MCF 10A (cell line): ENCODE measurements at regions of chr11 and their contacts with region 1.

Region 1: DNA sequence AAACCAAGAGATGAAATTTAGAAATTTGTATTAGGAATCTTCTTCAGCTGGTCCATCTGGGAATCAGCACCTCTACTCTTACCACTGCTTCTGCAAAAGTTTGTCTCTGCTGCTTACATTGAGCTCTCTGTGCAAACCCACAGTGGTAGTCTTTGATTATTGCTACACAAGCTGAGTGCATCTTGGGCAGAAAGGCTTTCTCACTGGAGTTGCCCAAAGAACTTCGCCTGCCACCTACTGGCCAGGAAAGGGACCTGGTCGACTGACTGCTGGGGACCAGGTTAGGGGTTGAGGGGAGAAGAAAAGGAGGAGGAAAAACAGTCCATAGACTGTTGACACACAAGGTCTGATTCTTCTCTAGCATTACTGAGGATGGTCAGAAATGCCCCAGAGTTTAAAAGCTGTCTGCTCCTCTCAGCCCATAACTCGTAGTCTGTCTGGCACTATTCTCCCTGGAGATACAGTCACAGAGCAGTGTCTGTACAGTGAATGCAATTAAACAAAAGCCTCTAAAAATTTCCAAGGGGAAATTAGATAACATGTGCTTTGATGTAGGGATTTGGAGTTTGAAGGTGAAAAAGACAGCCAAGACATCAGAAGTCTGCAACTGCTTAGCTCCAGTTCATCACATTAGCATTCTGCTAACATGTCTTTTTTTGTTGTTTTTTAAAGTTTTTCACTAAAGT is 215.0 kb upstream of the CTSC start:
- DNase-seq: peak; percentile 74
- H3K4me3 Mint-ChIP-seq: no peak overlapping the region
- H3K27ac Mint-ChIP-seq: no peak overlapping the region
- H3K4me1 Mint-ChIP-seq: peaks cover 11% of the 10 kb centered on the region
- H3K27me3 Mint-ChIP-seq: no peaks in the 10 kb centered on the region
- CTCF ChIP-seq: peak; percentile 37

Region 2: DNA sequence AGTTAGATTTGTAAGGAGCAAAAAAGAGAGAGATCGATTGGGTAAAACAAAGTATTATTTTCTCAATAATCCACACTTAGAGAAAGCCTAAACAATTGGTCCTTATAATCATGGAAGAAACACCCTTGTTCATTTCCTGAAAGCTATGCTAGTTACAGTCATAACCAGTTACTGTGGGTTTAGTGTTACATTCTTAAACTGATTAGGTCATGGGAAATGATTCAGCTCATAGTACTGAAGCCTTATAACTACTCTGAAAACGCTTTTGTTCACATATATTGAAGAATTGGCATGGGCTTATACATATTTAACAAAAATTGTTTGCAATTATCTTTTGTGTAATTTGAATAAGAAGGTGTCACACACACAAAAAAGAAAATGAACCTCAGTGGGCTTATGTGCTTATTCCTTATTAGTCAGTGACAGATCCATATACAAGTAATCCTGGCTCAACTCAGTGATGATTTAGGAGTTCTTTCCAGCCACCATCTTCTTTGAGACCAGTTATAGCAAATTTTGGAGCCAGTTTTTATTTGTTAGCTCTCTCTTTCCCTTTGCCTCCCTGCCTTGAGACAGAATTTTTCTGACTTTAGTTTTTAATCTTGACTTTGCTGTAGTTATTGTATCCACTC is 16.5 kb before region 1 on chr11:
- CTCF ChIA-PET with region 1: interaction called, 29 read pairs
- POLR2A ChIA-PET with region 1: interaction called, 3 read pairs
- intact Hi-C with region 1: no loop called
- DNase-seq: peak; percentile 82
- H3K4me3 Mint-ChIP-seq: no peak overlapping the region
- H3K27ac Mint-ChIP-seq: peak overlapping the region; percentile 0
- H3K4me1 Mint-ChIP-seq: peaks cover 37% of the 10 kb centered on the region
- H3K27me3 Mint-ChIP-seq: no peaks in the 10 kb centered on the region
- CTCF ChIP-seq: no peak

Region 3: DNA sequence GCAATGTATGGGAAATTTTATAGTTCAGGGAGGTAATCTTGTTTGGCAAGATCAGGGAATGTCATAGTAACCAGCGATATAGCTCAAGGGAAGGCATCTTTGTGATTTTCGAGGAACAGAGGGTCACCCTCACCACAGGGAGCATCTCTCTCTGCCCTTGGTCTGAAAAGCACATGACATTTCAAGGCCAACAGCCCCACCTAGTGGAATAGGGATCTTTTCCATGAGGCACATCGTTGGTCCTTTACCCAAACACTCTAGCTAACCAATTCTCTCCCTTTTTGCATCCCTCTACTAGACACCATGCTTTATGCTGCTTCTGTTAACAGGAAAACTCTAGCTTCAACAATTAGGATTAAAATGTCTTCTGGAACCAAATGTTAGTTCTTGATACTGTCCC is 334.3 kb after region 1 on chr11:
- CTCF ChIA-PET with region 1: interaction called, 23 read pairs
- POLR2A ChIA-PET with region 1: no interaction called
- intact Hi-C with region 1: loop called (anchors 2 kb)
- DNase-seq: peak; percentile 82
- H3K4me3 Mint-ChIP-seq: no peak overlapping the region
- H3K27ac Mint-ChIP-seq: no peak overlapping the region
- H3K4me1 Mint-ChIP-seq: no peaks in the 10 kb centered on the region
- H3K27me3 Mint-ChIP-seq: no peaks in the 10 kb centered on the region
- CTCF ChIP-seq: peak; percentile 70